Activated T-helper 1 cell treated with anti-CD3 and anti-CD28 coated beads, Interleukin-12 subunit alpha, Interleukin-12 subunit beta, Interleukin-2, Interleukin-4 antibody, amounts not matched to agents 30 ng/mL and 10 ng/mL and 1 ng/mL, durations not matched to agents 14 hours and 24 hours and 36 hours (primary cell): ENCODE measurements at regions of chr1 and their contacts with region 1.

Region 1: DNA sequence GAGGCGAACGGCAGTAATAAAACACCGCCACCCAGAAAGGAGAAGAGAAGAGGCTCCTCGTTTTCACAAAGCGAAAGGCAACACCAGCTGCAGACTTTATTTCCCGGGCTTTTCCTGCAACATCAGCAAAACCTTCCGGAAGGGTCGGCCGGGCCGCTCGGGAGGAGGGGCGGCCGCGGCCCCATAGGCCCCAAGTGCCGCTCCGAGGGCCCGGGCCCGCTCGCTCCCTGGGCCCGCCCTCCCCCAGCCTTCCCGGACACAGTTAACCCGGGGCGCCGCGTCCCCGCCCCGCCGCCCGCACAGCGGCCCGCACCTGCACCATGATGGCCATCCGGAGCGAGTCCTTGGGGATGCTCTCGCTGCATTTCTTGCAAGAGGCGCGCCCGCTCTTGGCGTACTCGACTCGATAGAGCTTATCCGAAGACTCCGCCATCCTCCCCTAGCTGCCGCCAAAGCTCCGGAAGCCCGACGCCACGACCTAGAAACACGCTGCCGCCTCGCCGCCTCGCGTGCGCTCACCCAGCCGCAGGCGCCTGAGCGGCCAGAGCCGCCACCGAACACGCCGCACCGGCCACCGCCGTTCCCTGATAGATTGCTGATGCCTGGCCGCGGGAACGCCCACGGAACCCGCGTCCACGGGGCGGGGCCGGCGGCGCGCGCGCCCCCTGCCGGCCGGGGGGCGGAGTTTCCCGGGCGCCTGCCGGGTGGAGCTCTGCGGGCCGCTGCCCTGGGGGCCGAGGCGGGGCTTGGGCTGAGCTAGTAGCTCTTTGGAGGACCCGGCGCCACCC is at the start of gene PARP1:
- DNase-seq: peak; percentile 90
- H3K4me3 Mint-ChIP-seq: peak within 1 kb of the TSS; percentile 99
- H3K27ac Mint-ChIP-seq: peak within 1 kb of the TSS; percentile 97
- H3K4me1 Mint-ChIP-seq: peaks cover 44% of the 10 kb centered on the region
- H3K27me3 Mint-ChIP-seq: peaks cover 8% of the 10 kb centered on the region
- total RNA-seq, gene PARP1: 209 and 220 TPM in 2 replicates

Region 2: DNA sequence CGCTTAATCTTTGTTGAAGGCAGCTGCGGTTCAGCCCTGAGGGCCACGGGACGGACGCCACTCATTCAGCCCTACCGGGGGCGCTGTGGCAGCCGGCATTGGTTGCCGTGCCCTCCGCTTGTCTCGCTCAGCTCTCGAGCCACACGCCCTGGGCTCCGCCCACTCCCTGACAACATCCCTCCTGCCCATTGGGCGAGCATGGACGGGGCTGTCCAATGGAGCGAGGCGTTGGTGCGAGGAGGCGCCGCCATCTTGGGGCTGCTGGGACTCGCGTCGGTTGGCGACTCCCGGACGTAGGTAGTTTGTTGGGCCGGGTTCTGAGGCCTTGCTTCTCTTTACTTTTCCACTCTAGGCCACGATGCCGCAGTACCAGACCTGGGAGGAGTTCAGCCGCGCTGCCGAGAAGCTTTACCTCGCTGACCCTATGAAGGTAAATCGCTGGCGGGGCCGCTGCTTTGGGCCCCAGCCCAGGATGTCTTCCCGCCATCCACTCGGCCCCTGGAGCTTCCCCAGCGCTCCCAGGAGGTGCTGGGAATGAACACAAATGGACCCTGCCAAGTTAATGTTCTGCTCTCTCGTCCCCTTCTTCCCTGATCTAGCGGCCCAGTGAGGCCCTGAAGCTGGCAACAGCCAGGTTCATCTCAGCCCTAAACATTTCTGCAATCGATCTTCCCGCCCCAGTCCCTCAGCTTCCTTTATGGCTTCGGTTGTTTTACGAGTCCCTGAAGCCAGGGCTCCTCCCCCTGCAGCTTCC is 629.9 kb before region 1 on chr1 and contains the start of gene SRP9:
- intact Hi-C with region 1: loop called (anchors 10 kb)
- DNase-seq: peak; percentile 99
- H3K4me3 Mint-ChIP-seq: no peak within 1 kb of the TSS
- H3K27ac Mint-ChIP-seq: no peak within 1 kb of the TSS
- H3K4me1 Mint-ChIP-seq: peaks cover 29% of the 10 kb centered on the region
- H3K27me3 Mint-ChIP-seq: no peaks in the 10 kb centered on the region
- total RNA-seq, gene SRP9: 230 and 233 TPM in 2 replicates

Region 3: GRCh38 chr1:225999227-225999911 is 408.3 kb before region 1 on chr1 and contains the start of gene SDE2:
- intact Hi-C with region 1: loop called (anchors 1 kb)
- DNase-seq: peak; percentile 99
- H3K4me3 Mint-ChIP-seq: peak within 1 kb of the TSS; percentile 100
- H3K27ac Mint-ChIP-seq: peak within 1 kb of the TSS; percentile 100
- H3K4me1 Mint-ChIP-seq: peaks cover 76% of the 10 kb centered on the region
- H3K27me3 Mint-ChIP-seq: no peaks in the 10 kb centered on the region
- total RNA-seq, gene SDE2: 28.2 and 28.4 TPM in 2 replicates

Region 4: DNA sequence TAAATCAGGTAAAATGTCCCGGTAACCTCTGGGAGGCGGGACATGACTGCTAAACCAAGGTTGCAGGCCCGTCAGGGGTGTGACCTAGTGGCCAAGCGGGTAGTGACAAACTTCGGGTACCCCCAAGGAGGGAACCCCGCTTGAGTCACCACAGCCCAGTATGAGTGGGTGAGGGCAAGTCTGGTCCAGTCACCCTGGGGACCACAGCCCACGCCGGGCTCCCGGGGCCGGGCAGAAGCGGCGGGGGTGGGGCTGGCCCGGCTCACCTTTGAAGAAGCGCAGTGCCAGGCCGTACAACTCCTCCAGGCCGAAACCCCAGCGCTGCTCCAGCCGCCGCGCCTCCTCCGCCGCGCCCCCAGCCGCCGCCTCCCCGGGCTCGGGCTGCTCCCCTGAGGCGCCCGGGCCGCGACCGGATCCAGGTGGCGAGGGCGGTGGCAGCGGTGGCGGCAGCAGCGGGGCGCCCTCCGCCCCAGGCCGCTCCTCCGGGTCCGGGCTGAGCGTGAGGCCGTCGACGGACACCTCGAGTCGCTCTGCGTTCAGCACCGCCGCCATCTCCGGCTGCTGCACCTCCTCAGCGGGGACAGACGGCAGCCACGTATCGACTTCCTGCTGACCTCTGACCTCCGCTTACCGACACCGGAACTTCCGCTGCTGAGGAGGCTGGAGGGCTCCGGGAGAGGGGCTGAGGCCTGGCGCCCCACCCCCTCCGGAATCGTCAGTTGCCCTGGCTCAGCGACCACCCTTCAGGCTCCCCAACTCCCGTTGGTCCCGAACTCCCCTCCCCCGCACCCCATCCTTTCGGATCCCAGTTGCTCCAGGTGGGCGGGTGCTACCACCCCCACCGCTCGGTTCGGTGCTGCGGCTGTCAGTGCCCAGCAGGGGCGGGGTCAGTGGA is 221.3 kb before region 1 on chr1 and contains the start of gene ACBD3:
- intact Hi-C with region 1: loop called (anchors 2 kb)
- DNase-seq: peak; percentile 84
- H3K4me3 Mint-ChIP-seq: peak within 1 kb of the TSS; percentile 96
- H3K27ac Mint-ChIP-seq: peak within 1 kb of the TSS; percentile 92
- H3K4me1 Mint-ChIP-seq: peaks cover 35% of the 10 kb centered on the region
- H3K27me3 Mint-ChIP-seq: no peaks in the 10 kb centered on the region
- total RNA-seq, gene ACBD3: 23.6 and 26.0 TPM in 2 replicates

Region 5: DNA sequence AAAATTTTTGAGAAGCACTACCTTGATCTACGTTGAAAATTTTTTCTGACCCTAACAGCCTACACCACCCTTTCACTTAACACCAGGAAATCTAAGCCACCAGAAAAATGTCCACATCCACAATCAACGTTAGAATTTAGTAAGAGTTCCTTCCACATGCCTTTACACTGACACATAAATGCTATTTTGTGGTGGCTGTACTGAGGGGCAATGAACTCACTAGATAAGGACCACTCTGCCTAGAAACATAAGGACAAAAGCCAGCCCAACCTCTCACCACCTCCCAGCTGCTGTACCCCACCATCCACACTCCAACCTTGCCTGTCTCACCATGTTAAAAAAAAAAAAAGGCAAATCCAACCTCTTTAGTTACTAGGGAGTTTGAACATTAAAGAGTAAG is 29.6 kb before region 1 on chr1:
- intact Hi-C with region 1: no loop called
- DNase-seq: no peak
- H3K4me3 Mint-ChIP-seq: no peak overlapping the region
- H3K27ac Mint-ChIP-seq: no peak overlapping the region
- H3K4me1 Mint-ChIP-seq: peaks cover 19% of the 10 kb centered on the region
- H3K27me3 Mint-ChIP-seq: no peaks in the 10 kb centered on the region

Region 6: GRCh38 chr1:226424228-226425003 is 16.7 kb after region 1 on chr1:
- intact Hi-C with region 1: loop called (anchors 1 kb)
- DNase-seq: no peak
- H3K4me3 Mint-ChIP-seq: no peak overlapping the region
- H3K27ac Mint-ChIP-seq: peak overlapping the region; percentile 56
- H3K4me1 Mint-ChIP-seq: peaks cover 7% of the 10 kb centered on the region
- H3K27me3 Mint-ChIP-seq: peaks cover 10% of the 10 kb centered on the region

Region 7: DNA sequence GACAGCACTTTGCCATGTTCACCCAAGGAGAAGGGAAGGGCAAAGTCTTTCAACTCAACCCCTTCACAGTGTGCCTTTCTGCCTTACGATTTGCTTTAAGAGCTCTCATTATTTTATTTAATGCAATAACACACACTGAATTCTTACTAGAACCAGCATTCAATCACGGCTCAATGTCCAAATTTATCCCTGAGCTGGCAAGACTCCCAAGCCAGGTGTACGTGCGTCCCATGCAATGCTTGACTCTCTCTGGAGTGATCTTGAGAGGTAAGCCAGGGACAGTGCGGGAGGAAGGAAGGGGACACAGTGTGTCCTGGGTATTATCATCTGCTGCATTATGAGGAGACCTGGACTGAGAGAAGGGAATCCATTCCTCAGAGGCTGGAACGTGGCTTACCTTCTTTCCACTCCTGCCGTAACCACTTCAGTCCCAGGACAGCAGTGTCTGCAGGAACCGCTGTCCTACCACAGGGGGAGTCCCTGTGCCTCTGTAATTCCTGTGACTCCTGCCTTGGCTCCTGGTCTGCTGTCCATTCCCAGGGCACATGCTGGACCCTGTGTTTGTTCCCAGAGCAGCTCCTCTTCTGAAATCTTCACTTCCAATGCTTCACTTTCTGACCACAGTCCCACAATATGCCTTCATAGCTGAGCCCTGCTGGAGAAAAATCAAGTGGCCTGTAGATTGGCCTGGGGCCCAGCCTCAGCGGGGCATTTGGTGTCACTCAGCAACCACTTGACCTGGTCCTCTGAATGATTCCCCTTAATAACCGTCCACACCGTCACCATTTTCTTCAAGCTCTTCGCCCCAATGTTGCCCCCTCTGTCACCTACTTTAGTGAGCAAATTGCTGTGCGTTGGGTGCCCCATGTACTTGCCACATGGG is 112.3 kb after region 1 on chr1:
- intact Hi-C with region 1: no loop called
- DNase-seq: no peak
- H3K4me3 Mint-ChIP-seq: no peak overlapping the region
- H3K27ac Mint-ChIP-seq: no peak overlapping the region
- H3K4me1 Mint-ChIP-seq: no peaks in the 10 kb centered on the region
- H3K27me3 Mint-ChIP-seq: peaks cover 5% of the 10 kb centered on the region

Region 8: GRCh38 chr1:226679853-226680516 is 272.3 kb after region 1 on chr1:
- intact Hi-C with region 1: loop called (anchors 5 kb)
- DNase-seq: peak; percentile 65
- H3K4me3 Mint-ChIP-seq: peak overlapping the region; percentile 82
- H3K27ac Mint-ChIP-seq: peak overlapping the region; percentile 97
- H3K4me1 Mint-ChIP-seq: peaks cover 97% of the 10 kb centered on the region
- H3K27me3 Mint-ChIP-seq: no peaks in the 10 kb centered on the region

Region 9: DNA sequence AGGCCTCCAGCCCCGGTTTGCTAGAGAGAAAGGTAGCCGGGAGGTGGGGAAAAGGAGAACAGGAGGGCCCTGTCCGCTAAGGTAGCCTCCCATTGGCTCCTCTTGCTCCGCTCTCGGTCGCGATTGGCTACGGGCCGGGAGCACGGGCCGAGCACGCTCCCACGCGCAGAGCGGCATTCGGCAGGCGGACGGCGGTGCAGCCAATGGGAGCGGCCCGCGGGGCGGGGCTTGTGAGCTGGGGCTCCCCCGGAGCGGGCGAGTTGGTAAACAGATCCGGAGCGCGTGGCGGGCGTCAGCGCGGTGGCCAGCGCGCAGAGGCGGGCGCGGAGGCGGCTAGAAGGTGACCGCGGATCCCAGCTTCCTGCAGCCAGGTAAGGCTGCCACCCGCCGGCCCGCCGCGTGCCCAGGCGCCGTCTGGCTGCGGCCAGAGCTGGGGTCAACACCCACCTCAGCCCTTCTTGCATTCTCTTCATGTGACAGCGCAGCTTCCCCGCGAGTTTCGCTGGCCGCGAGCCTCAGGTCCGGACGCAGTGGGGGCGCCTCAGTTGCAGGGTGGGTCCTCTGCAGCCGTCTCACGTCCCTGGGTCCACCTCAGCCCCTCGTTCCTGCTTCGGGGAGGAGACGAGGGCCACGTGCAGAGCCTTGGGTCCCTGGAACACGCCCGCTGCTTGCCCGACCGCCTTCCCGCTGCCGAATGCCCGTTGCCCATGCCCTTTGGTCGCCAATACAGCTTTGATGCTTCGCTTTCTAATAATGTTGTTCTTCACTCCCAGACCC is 532.5 kb after region 1 on chr1 and contains the start of gene COQ8A:
- intact Hi-C with region 1: loop called (anchors 2 kb)
- DNase-seq: peak; percentile 100
- H3K4me3 Mint-ChIP-seq: peak within 1 kb of the TSS; percentile 89
- H3K27ac Mint-ChIP-seq: peak within 1 kb of the TSS; percentile 97
- H3K4me1 Mint-ChIP-seq: peaks cover 41% of the 10 kb centered on the region
- H3K27me3 Mint-ChIP-seq: no peaks in the 10 kb centered on the region
- total RNA-seq, gene COQ8A: 33.1 and 33.8 TPM in 2 replicates